Caco-2 (cell line): ENCODE measurements at regions of chr19 and their contacts with region 1.

Region 1: GRCh38 chr19:18985257-18985656 is 44.2 kb upstream of the HOMER3 start:
- DNase-seq: no peak
- H3K4me3 ChIP-seq: no peak overlapping the region
- H3K4me3 Mint-ChIP-seq: no peak overlapping the region
- H3K27ac Mint-ChIP-seq: no peak overlapping the region
- H3K4me1 ChIP-seq: no peaks in the 10 kb centered on the region
- H3K4me1 Mint-ChIP-seq: no peaks in the 10 kb centered on the region
- H3K27me3 ChIP-seq: no peaks in the 10 kb centered on the region
- H3K27me3 Mint-ChIP-seq: no peaks in the 10 kb centered on the region
- CTCF ChIP-seq: no peak

Region 2: GRCh38 chr19:18771328-18772242 is 213.7 kb before region 1 on chr19:
- CTCF ChIA-PET with region 1: no interaction called
- POLR2A ChIA-PET with region 1: no interaction called
- intact Hi-C with region 1: no loop called
- DNase-seq: peak; percentile 65 to 69
- H3K4me3 ChIP-seq: no peak overlapping the region
- H3K4me3 Mint-ChIP-seq: no peak overlapping the region
- H3K27ac Mint-ChIP-seq: no peak overlapping the region
- H3K4me1 ChIP-seq: no peaks in the 10 kb centered on the region
- H3K4me1 Mint-ChIP-seq: no peaks in the 10 kb centered on the region
- H3K27me3 ChIP-seq: no peaks in the 10 kb centered on the region
- H3K27me3 Mint-ChIP-seq: no peaks in the 10 kb centered on the region
- CTCF ChIP-seq: peak; percentile 46 to 67

Region 3: DNA sequence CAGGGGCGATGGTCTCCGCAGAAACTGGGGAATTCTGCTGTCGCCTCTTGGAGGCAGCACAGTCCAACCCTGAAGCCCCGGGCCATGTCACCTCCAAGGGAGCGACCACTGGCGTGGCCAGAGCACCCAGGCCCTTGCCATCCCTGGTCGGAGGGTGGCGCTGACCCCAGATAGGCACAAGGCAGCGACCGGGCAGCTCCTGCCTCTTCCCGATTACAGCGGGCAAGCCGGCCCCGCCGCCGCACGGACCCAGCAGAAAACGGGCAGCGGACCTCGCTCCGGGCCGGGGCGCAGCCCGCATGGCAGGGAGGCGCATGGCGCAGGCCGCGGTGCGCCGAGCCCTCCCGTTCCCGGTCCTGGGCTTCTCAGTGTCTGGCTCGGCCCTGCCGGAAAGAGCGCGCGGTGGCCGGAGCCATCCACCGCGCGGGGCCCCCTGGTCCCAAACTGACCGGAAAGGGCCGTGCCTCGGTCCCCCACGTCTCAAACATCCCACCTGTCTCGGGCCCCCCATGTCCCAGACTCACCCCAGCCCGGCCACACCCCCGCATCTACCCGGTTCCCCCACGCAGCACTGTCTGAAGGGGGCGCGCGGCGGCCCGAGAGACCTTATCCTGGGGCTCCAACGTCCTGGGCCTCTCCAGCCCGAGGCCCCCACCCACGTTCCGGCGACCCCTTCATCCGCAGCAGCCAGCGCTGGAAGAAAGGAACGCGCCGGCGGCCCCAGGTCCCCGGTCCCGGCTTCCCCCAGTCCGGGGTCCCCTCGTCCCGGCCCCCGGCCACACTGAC is 90.0 kb before region 1 on chr19:
- CTCF ChIA-PET with region 1: interaction called, 13 read pairs
- POLR2A ChIA-PET with region 1: interaction called, 7 read pairs
- intact Hi-C with region 1: loop called (anchors 1 kb)
- DNase-seq: peak; percentile 84 to 86
- H3K4me3 ChIP-seq: peak overlapping the region; percentile 70
- H3K4me3 Mint-ChIP-seq: peak overlapping the region; percentile 74
- H3K27ac Mint-ChIP-seq: no peak overlapping the region
- H3K4me1 ChIP-seq: peaks cover 17% of the 10 kb centered on the region
- H3K4me1 Mint-ChIP-seq: no peaks in the 10 kb centered on the region
- H3K27me3 ChIP-seq: no peaks in the 10 kb centered on the region
- H3K27me3 Mint-ChIP-seq: no peaks in the 10 kb centered on the region
- CTCF ChIP-seq: peak; percentile 61 to 74

Region 4: GRCh38 chr19:18919086-18919899 is 66.0 kb before region 1 on chr19 and contains the starts of genes COPE and DDX49:
- CTCF ChIA-PET with region 1: interaction called, 10 read pairs
- POLR2A ChIA-PET with region 1: interaction called, 5 read pairs
- intact Hi-C with region 1: loop called (anchors 1 kb)
- DNase-seq: peak; percentile 96 to 98
- H3K4me3 ChIP-seq: peak within 1 kb of the TSS; percentile 90
- H3K4me3 Mint-ChIP-seq: peak within 1 kb of the TSS; percentile 73
- H3K27ac Mint-ChIP-seq: peak within 1 kb of the TSS; percentile 92
- H3K4me1 ChIP-seq: peaks cover 5% of the 10 kb centered on the region
- H3K4me1 Mint-ChIP-seq: no peaks in the 10 kb centered on the region
- H3K27me3 ChIP-seq: no peaks in the 10 kb centered on the region
- H3K27me3 Mint-ChIP-seq: no peaks in the 10 kb centered on the region
- CTCF ChIP-seq: no peak
- total RNA-seq, gene COPE: 207 and 213 TPM in 2 replicates
- total RNA-seq, gene DDX49: 46.8 and 48.7 TPM in 2 replicates

Region 5: GRCh38 chr19:18940769-18941407 is 44.4 kb before region 1 on chr19 and contains the start of gene HOMER3:
- CTCF ChIA-PET with region 1: no interaction called
- POLR2A ChIA-PET with region 1: no interaction called
- intact Hi-C with region 1: loop called (anchors 5 kb)
- DNase-seq: peak; percentile 63 to 85
- H3K4me3 ChIP-seq: peak within 1 kb of the TSS; percentile 81
- H3K4me3 Mint-ChIP-seq: peak within 1 kb of the TSS; percentile 77
- H3K27ac Mint-ChIP-seq: peak within 1 kb of the TSS; percentile 73
- H3K4me1 ChIP-seq: no peaks in the 10 kb centered on the region
- H3K4me1 Mint-ChIP-seq: peaks cover 12% of the 10 kb centered on the region
- H3K27me3 ChIP-seq: no peaks in the 10 kb centered on the region
- H3K27me3 Mint-ChIP-seq: no peaks in the 10 kb centered on the region
- CTCF ChIP-seq: peak; percentile 17 to 54
- total RNA-seq, gene HOMER3: 18.0 and 19.0 TPM in 2 replicates

Region 6: GRCh38 chr19:18951665-18952281 is 33.5 kb before region 1 on chr19:
- CTCF ChIA-PET with region 1: no interaction called
- POLR2A ChIA-PET with region 1: interaction called, 10 read pairs
- intact Hi-C with region 1: no loop called
- DNase-seq: no peak
- H3K4me3 ChIP-seq: no peak overlapping the region
- H3K4me3 Mint-ChIP-seq: no peak overlapping the region
- H3K27ac Mint-ChIP-seq: no peak overlapping the region
- H3K4me1 ChIP-seq: no peaks in the 10 kb centered on the region
- H3K4me1 Mint-ChIP-seq: no peaks in the 10 kb centered on the region
- H3K27me3 ChIP-seq: no peaks in the 10 kb centered on the region
- H3K27me3 Mint-ChIP-seq: no peaks in the 10 kb centered on the region
- CTCF ChIP-seq: no peak

Region 7: GRCh38 chr19:19034204-19034624 is 49.0 kb after region 1 on chr19:
- CTCF ChIA-PET with region 1: no interaction called
- POLR2A ChIA-PET with region 1: no interaction called
- intact Hi-C with region 1: no loop called
- DNase-seq: peak; percentile 80 to 85
- H3K4me3 ChIP-seq: peak overlapping the region; percentile 77
- H3K4me3 Mint-ChIP-seq: peak overlapping the region; percentile 96
- H3K27ac Mint-ChIP-seq: peak overlapping the region; percentile 85
- H3K4me1 ChIP-seq: no peaks in the 10 kb centered on the region; the same call in 1 of the 2 replicates
- H3K4me1 Mint-ChIP-seq: no peaks in the 10 kb centered on the region
- H3K27me3 ChIP-seq: no peaks in the 10 kb centered on the region
- H3K27me3 Mint-ChIP-seq: no peaks in the 10 kb centered on the region
- CTCF ChIP-seq: no peak

Region 8: DNA sequence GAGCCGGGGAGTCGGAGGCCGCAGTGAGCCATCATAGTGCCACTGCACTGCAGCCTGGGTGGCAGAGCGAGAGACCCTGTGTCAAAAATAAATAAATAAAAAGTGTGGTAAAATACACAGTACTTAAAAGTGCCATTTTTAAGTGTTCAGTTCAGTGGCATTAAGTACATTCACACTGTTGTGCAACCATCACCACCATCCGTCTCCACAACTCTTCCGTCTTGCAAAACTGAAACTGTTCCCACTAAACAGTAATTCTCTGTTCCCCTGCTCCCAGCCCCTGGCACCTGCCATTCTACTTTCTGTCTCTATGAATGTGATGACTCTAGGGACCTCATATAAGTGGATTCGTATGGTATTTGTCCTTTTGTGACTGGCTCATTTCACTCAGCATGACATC is 91.8 kb after region 1 on chr19:
- CTCF ChIA-PET with region 1: no interaction called
- POLR2A ChIA-PET with region 1: no interaction called
- intact Hi-C with region 1: no loop called
- DNase-seq: no peak
- H3K4me3 ChIP-seq: no peak overlapping the region
- H3K4me3 Mint-ChIP-seq: no peak overlapping the region
- H3K27ac Mint-ChIP-seq: no peak overlapping the region
- H3K4me1 ChIP-seq: no peaks in the 10 kb centered on the region; the same call in 1 of the 2 replicates
- H3K4me1 Mint-ChIP-seq: peaks cover 7% of the 10 kb centered on the region
- H3K27me3 ChIP-seq: no peaks in the 10 kb centered on the region
- H3K27me3 Mint-ChIP-seq: no peaks in the 10 kb centered on the region
- CTCF ChIP-seq: no peak

Region 9: GRCh38 chr19:19109601-19110000 is 124.3 kb after region 1 on chr19:
- CTCF ChIA-PET with region 1: no interaction called
- POLR2A ChIA-PET with region 1: no interaction called
- intact Hi-C with region 1: no loop called
- DNase-seq: no peak
- H3K4me3 ChIP-seq: no peak overlapping the region
- H3K4me3 Mint-ChIP-seq: no peak overlapping the region
- H3K27ac Mint-ChIP-seq: no peak overlapping the region
- H3K4me1 ChIP-seq: peaks cover 11% of the 10 kb centered on the region
- H3K4me1 Mint-ChIP-seq: no peaks in the 10 kb centered on the region
- H3K27me3 ChIP-seq: no peaks in the 10 kb centered on the region
- H3K27me3 Mint-ChIP-seq: no peaks in the 10 kb centered on the region
- CTCF ChIP-seq: no peak